Posterior cingulate gyrus (tissue), 11 donors: ENCODE measurements at regions of chr2 and their contacts with region 1.

Region 1: DNA sequence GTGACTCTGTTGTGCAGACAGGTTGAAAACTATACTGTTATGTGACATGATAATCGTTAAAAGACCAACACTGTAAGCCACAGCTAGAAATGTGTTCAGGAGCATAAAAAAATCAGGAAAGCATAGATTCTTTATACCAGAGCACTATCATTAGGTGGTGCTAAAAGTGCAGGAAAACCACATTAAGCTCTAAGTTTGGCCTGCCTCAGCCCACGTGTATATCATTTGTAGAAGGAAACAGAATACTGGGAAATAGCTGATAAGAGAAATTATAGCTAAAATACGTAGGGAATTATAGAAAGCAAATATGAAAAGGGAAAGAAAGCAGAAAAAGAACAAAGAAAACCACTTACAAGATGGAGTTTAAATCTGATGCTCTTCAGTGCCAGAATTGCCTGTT is 26.5 kb upstream of the C2orf74 start:
- DNase-seq: peak in 1 of 10 donors; percentile 15

Region 2: DNA sequence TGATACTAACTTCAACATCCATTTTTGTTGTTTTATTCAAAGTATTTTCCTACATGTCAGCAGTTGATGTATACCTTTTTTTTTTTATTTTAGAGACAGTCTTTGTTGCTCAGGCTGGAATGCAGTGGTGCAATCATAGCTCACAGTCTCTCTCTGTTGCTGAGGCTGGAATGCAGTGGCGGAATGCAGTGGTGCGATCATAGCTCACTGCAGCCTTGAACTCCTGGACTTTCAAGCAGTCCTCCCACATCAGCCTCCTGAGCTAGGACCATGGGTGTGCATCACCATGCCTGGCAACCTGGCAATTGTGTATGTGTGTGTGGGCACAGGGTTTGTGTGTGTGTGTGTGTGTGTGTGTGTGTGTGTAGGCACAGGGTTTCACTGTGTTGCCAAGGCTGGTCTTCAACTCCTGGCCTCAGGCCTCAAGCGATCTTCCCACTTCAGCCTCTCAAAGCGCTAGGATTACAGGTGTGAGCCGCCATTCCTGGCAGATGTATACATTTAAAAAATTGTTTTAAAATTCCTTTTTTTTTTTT is 45.1 kb before region 1 on chr2:
- intact Hi-C with region 1: no loop called
- DNase-seq: peak in 1 of 10 donors; percentile 53

Region 3: GRCh38 chr2:61220768-61221167 is 85.3 kb after region 1 on chr2:
- intact Hi-C with region 1: no loop called
- DNase-seq: no peak

Region 4: GRCh38 chr2:61639721-61640120 is 504.2 kb after region 1 on chr2:
- intact Hi-C with region 1: loop called (anchors 5 kb)
- DNase-seq: no peak